Naive thymus-derived CD4-positive, alpha-beta T cell (primary cell): ENCODE measurements at regions of chr6 and their contacts with region 1.

Region 1: GRCh38 chr6:52284460-52285176 is at the start of gene MCM3:
- DNase-seq: peak; percentile 76 to 98 (median 97)
- ATAC-seq: peak; percentile 98
- H3K4me3 ChIP-seq: peak within 1 kb of the TSS; percentile 77
- H3K4me3 Mint-ChIP-seq: peak within 1 kb of the TSS in 4 of 10 donors; percentile 42 to 89 (median 58)
- H3K27ac ChIP-seq: peak within 1 kb of the TSS; percentile 74
- H3K27ac Mint-ChIP-seq: peak within 1 kb of the TSS in 6 of 9 donors; percentile 28 to 77 (median 30)
- H3K4me1 ChIP-seq: peaks cover 32 to 33% of the 10 kb centered on the region in 2 donors
- H3K4me1 Mint-ChIP-seq: peaks cover 22 to 58% (median 48%) of the 10 kb centered on the region in 7 donors
- H3K27me3 ChIP-seq: no peaks in the 10 kb centered on the region
- H3K27me3 Mint-ChIP-seq: no peaks in the 10 kb centered on the region
- total RNA-seq, gene MCM3: 20.3 to 157 (median 45.2) TPM

Region 2: DNA sequence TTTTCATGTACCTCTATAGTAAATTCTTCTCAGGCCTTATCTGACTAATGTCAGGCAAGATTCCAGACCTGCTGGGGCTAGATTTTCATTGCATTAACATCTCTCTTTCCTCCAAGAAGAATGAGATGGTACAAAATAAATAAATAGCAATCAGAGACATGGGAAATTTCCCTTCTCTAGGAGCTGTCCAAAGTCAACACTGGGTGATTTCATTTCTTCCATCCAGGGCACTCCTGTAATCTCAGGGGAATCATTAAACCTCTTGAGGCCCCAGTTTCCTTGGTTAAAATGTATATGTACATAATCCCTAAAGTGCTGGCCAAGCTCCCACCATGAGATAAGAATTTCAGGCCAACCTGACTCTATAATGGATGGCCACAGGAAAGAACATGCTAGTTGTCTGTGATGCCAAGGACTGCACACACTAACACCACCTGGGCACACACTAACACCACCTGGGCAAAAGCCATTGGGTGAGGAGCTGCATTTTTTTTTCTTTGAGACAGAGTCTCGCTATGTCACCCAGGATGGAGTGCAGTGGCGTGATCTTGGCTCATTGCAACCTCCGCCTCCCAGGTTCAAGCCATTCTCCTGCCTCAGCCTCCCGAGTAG is 41.2 kb before region 1 on chr6:
- CTCF ChIA-PET with region 1: no interaction called
- POLR2A ChIA-PET with region 1: no interaction called
- intact Hi-C with region 1: no loop called
- DNase-seq: no peak
- ATAC-seq: no peak
- H3K4me3 ChIP-seq: no peak overlapping the region
- H3K4me3 Mint-ChIP-seq: no peak overlapping the region
- H3K27ac ChIP-seq: no peak overlapping the region
- H3K27ac Mint-ChIP-seq: no peak overlapping the region
- H3K4me1 ChIP-seq: no peaks in the 10 kb centered on the region
- H3K4me1 Mint-ChIP-seq: peaks cover 0 to 9% (median 0%) of the 10 kb centered on the region in 7 donors
- H3K27me3 ChIP-seq: no peaks in the 10 kb centered on the region
- H3K27me3 Mint-ChIP-seq: peaks cover 0 to 54% (median under 1%) of the 10 kb centered on the region in 5 donors

Region 3: DNA sequence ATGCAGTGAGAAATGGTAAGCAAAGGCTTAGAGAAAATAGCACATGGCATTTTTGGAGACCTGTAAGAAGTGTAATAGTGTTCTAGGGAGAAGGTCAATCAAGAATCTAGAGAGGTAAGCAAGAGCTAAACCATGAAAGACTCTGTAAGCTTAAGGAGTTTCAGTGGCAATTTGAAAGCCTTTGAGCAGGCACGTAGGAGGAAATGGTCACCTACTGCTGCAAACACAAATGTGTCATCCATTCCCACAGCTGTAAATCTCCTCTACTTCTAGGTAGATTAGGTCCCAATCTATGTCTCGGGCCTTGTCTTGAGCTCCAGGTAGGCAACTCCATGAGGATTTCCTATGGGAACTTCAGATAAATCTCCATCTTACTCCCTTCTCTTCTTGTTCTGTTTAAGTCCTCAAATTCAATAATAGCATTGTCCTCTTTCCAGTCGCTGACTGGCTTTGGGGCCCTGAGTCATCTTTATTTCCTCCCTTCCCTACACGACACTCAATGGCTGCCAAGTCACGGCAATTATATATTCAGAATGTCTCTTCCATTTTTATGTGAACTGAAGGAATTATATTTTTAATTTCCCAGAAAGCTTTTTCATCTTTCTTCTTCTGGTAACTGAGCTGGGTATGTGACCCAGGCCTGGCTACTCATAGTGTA is 53.1 kb after region 1 on chr6:
- CTCF ChIA-PET with region 1: interaction called, 3 read pairs
- POLR2A ChIA-PET with region 1: interaction called, 9 read pairs
- intact Hi-C with region 1: loop called in 1 of 2 experiments (anchors 2 kb)
- DNase-seq: no peak
- ATAC-seq: no peak
- H3K4me3 ChIP-seq: no peak overlapping the region
- H3K4me3 Mint-ChIP-seq: peak overlapping the region in 2 of 10 donors; percentile 8 to 68
- H3K27ac ChIP-seq: no peak overlapping the region
- H3K27ac Mint-ChIP-seq: peak overlapping the region in 8 of 9 donors; percentile 11 to 94 (median 46)
- H3K4me1 ChIP-seq: peaks cover 28 to 58% of the 10 kb centered on the region in 2 donors
- H3K4me1 Mint-ChIP-seq: peaks cover 45 to 79% (median 75%) of the 10 kb centered on the region in 7 donors
- H3K27me3 ChIP-seq: no peaks in the 10 kb centered on the region
- H3K27me3 Mint-ChIP-seq: no peaks in the 10 kb centered on the region

Region 4: DNA sequence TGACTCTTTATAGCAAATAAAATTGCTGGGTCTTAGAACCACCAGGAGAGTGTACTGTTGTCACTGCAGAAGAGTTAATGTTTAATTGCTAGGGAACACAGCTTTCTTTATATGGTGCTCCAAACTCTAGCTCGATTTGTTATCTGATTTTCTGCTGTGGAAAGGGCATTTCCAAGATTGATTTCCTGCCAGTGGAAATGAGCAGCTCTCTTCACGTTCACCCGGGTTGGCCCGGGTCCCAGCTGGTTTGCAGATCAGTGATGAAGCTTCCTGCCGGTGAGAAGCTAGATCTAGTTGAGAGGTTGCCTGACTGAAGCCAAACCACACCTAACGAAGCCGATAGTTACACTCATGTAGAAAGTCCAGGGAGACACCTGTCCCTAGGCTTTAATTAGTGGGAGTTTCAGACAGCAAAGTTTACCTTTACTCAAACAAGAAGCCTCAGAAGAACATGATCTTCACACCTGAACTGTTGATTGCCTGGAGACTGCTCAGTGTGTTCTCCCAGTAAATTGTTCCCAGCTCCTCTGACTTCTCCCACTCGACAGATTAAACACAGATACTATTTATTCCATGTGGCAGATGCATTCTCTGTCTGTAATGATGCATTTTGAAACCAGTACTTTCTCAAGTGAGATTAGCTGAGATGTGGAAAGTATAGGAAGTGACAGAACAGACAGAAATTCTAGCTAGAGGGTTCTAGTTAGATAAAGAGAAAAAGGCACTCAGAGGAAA is 105.2 kb after region 1 on chr6:
- CTCF ChIA-PET with region 1: interaction called, 50 read pairs
- POLR2A ChIA-PET with region 1: interaction called, 62 read pairs
- intact Hi-C with region 1: loop called (anchors 1 to 2 kb)
- DNase-seq: peak; percentile 33 to 79 (median 62)
- ATAC-seq: peak; percentile 60
- H3K4me3 ChIP-seq: peak overlapping the region; percentile 62
- H3K4me3 Mint-ChIP-seq: peak overlapping the region; percentile 75 to 89 (median 86)
- H3K27ac ChIP-seq: peak overlapping the region; percentile 89
- H3K27ac Mint-ChIP-seq: peak overlapping the region; percentile 93 to 100 (median 98)
- H3K4me1 ChIP-seq: peaks cover 59 to 75% of the 10 kb centered on the region in 2 donors
- H3K4me1 Mint-ChIP-seq: peaks cover 49 to 96% (median 90%) of the 10 kb centered on the region in 7 donors
- H3K27me3 ChIP-seq: no peaks in the 10 kb centered on the region
- H3K27me3 Mint-ChIP-seq: peaks cover 0 to 6% (median 0%) of the 10 kb centered on the region in 5 donors

Region 5: GRCh38 chr6:52503848-52504781 is 219.5 kb after region 1 on chr6:
- CTCF ChIA-PET with region 1: no interaction called
- POLR2A ChIA-PET with region 1: no interaction called
- intact Hi-C with region 1: loop called in 1 of 2 experiments (anchors 2 kb)
- DNase-seq: no peak
- ATAC-seq: peak; percentile 71
- H3K4me3 ChIP-seq: no peak overlapping the region
- H3K4me3 Mint-ChIP-seq: no peak overlapping the region
- H3K27ac ChIP-seq: no peak overlapping the region
- H3K27ac Mint-ChIP-seq: no peak overlapping the region
- H3K4me1 ChIP-seq: no peaks in the 10 kb centered on the region
- H3K4me1 Mint-ChIP-seq: peaks cover 0 to 6% (median 0%) of the 10 kb centered on the region in 7 donors
- H3K27me3 ChIP-seq: no peaks in the 10 kb centered on the region
- H3K27me3 Mint-ChIP-seq: no peaks in the 10 kb centered on the region

Region 6: DNA sequence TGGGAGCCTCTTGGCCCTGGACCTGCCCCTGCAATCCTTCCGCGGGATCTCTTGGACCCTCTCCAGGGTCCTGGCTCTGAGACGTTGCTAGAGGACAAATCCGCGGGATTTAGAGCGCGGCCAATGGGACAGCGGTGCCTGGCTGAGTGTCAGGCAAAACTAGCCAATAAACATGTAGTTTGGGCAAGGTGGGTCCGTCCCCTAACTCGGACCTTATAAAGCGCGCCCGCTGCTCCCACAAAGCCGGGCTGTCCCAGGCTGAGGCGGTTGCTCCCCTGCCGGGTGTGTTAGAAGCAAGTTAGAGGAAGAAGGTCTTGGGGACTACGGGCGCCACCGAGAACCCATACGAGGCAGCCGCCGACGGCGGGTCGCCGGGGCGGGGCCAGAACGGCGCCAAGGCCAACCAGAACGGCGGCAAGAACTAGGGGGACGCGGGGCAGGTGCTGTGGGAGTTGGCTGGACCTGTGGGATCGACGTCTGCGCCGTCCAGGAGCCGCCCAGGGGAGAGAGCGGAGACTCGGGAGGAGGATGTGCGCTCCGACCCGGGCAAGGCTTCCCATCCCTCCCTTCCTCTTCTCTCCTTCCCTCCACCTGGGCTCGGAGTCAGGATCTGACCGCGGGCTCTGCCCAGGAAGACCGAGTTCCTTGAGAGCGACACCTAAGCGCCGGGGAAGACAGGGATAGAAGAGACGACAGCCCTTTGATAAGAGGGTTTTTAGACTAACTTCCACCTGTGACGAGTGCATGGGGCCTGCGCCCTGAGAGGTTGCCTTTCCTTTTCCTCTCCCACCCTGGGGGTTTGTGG is 379.8 kb after region 1 on chr6:
- CTCF ChIA-PET with region 1: interaction called, 23 read pairs
- POLR2A ChIA-PET with region 1: interaction called, 3 read pairs
- intact Hi-C with region 1: loop called (anchors 1 kb)
- DNase-seq: peak in 8 of 9 donors; percentile 22 to 73 (median 34)
- ATAC-seq: peak; percentile 78
- H3K4me3 ChIP-seq: peak overlapping the region; percentile 68
- H3K4me3 Mint-ChIP-seq: no peak overlapping the region
- H3K27ac ChIP-seq: peak overlapping the region; percentile 28
- H3K27ac Mint-ChIP-seq: no peak overlapping the region
- H3K4me1 ChIP-seq: peaks cover 0 to 5% of the 10 kb centered on the region in 2 donors
- H3K4me1 Mint-ChIP-seq: peaks cover 0 to 6% (median 0%) of the 10 kb centered on the region in 7 donors
- H3K27me3 ChIP-seq: peaks cover 0 to 3% of the 10 kb centered on the region in 2 donors
- H3K27me3 Mint-ChIP-seq: no peaks in the 10 kb centered on the region

Region 7: DNA sequence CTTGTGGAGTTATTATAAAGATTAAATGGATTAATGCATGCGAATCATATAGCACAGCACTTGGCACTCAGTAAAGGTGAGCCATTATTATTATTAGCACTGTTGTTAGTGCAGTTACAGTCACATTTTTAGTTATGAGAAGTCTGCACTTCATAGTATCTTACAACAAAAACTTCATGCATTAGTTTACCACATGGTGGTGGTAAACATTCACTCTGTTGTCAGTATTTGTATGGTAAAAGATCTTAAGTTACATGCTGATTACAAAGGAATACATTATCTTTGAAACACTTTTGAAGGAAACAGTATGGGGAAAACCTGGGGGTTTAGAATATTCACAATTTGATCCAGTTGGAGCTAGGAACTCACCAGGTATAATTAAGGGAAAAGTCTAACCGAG is 407.1 kb after region 1 on chr6:
- CTCF ChIA-PET with region 1: no interaction called
- POLR2A ChIA-PET with region 1: no interaction called
- intact Hi-C with region 1: no loop called
- DNase-seq: no peak
- ATAC-seq: no peak
- H3K4me3 ChIP-seq: no peak overlapping the region
- H3K4me3 Mint-ChIP-seq: no peak overlapping the region
- H3K27ac ChIP-seq: no peak overlapping the region
- H3K27ac Mint-ChIP-seq: no peak overlapping the region
- H3K4me1 ChIP-seq: no peaks in the 10 kb centered on the region
- H3K4me1 Mint-ChIP-seq: no peaks in the 10 kb centered on the region
- H3K27me3 ChIP-seq: no peaks in the 10 kb centered on the region
- H3K27me3 Mint-ChIP-seq: peaks cover 0 to 12% (median 0%) of the 10 kb centered on the region in 5 donors

Region 8: DNA sequence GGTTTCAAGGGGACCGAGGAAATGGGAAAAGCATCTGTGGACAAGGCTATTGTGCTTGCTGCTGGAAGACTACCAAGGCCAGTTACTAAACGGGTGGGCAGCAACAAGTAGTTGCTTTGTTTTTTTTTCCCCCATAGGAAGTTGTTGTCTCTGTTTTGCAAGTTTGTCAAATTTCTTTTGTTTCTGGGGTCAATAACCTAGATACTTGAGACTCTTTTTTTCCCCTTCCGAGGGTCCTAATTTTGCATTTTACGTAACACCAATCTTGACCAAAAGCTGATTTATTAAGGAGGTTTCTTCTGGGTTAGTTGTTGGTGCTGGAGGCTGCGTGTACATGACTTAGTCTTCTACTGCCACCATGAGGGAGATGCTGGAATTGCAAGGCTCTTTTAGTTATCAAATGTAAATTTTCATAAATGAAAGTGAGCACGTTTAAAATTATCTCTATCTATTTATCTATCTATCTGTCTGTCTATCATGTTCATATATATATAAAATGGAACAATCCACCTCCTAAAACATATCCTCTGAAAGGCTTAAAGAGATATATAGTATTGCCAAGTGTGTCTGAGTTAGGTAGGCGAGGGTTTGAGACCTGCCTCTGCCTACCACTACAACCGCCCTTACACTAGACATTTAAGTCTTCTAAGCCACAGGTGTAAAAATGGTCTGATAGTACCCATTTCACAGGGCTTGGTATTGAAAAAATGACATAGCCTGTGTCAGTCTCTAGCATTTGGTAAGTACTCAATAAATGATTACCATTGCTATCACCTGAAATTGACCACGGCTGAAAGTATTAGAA is 1200.1 kb after region 1 on chr6:
- CTCF ChIA-PET with region 1: no interaction called
- POLR2A ChIA-PET with region 1: no interaction called
- intact Hi-C with region 1: loop called in 1 of 2 experiments (anchors 5 kb)
- DNase-seq: peak; percentile 28 to 74 (median 60)
- ATAC-seq: peak; percentile 86
- H3K4me3 ChIP-seq: no peak overlapping the region
- H3K4me3 Mint-ChIP-seq: no peak overlapping the region
- H3K27ac ChIP-seq: no peak overlapping the region
- H3K27ac Mint-ChIP-seq: no peak overlapping the region
- H3K4me1 ChIP-seq: no peaks in the 10 kb centered on the region
- H3K4me1 Mint-ChIP-seq: peaks cover 0 to 19% (median 0%) of the 10 kb centered on the region in 7 donors
- H3K27me3 ChIP-seq: no peaks in the 10 kb centered on the region
- H3K27me3 Mint-ChIP-seq: peaks cover 20 to 34% (median 25%) of the 10 kb centered on the region in 5 donors